ENCODE measurements at regions of chr10 and their contacts with region 1.

Region 1: GRCh38 chr10:117545141-117546019 is 2.8 kb downstream of the EMX2 start:
- DNase-seq: peak in 3 of 5 donors; percentile 50 to 62 (median 60)
- H3K4me3 ChIP-seq: peak overlapping the region; percentile 84
- H3K27ac ChIP-seq: peak overlapping the region in 1 of 2 donors; percentile 53
- H3K4me1 ChIP-seq: peaks cover 3% of the 10 kb centered on the region
- H3K27me3 ChIP-seq: no peaks in the 10 kb centered on the region
- CTCF ChIP-seq: no peak
- EP300 ChIP-seq: no peak
- POLR2A ChIP-seq: no peak

Region 2: DNA sequence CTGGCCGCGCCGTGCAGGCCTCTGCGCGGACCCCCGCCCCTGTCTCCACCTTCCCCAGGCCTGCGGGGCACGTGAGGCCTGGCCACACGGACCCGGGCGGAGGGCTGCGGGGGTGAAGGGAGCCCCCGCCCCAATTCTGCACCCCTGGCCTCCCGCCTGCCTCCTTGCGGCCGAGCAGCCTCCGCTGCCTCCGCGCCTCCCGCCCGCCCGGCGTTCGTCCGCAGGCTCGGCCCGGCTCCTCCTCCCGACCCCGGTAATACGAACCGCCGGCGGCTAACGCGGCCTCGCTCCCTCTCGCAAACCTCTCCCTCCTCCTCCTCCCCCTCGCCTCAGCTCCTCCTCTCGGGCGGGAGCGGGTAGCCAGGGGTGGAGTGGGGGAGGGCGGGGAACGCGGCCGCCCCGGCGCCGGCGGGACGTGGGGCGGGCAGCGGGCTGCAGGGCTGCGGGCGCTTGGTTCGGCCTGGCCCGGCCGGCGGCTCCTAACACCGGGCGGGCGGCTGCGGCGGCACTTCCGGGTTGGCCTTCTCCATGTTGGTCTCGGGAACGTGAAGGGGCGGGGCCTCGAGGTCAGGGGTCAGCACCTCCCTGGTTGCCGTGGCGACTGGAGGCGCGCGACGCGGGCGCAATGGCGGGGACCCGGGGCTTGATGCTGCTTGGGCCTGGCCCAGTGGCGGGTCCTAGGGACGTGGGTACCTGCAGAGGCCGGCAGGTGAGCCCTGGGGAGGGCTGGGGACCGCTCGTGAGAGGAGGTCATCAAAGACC is 501.2 kb after region 1 on chr10 and contains the start of gene RAB11FIP2:
- intact Hi-C with region 1: loop called in 2 of 4 experiments (anchors 5 kb)
- DNase-seq: peak; percentile 96 to 99 (median 98)
- H3K4me3 ChIP-seq: peak within 1 kb of the TSS; percentile 97
- H3K27ac ChIP-seq: peak within 1 kb of the TSS; percentile 60 to 88
- H3K4me1 ChIP-seq: peaks cover 5% of the 10 kb centered on the region
- H3K27me3 ChIP-seq: no peaks in the 10 kb centered on the region
- CTCF ChIP-seq: peak in 1 of 3 donors; percentile 27
- EP300 ChIP-seq: no peak
- POLR2A ChIP-seq: peak; percentile 15
- total RNA-seq, gene RAB11FIP2: 23.2 to 47.8 (median 26.9) TPM